Tibial artery (tissue), 4 donors: ENCODE measurements at regions of chr9 and their contacts with region 1.

Region 1: DNA sequence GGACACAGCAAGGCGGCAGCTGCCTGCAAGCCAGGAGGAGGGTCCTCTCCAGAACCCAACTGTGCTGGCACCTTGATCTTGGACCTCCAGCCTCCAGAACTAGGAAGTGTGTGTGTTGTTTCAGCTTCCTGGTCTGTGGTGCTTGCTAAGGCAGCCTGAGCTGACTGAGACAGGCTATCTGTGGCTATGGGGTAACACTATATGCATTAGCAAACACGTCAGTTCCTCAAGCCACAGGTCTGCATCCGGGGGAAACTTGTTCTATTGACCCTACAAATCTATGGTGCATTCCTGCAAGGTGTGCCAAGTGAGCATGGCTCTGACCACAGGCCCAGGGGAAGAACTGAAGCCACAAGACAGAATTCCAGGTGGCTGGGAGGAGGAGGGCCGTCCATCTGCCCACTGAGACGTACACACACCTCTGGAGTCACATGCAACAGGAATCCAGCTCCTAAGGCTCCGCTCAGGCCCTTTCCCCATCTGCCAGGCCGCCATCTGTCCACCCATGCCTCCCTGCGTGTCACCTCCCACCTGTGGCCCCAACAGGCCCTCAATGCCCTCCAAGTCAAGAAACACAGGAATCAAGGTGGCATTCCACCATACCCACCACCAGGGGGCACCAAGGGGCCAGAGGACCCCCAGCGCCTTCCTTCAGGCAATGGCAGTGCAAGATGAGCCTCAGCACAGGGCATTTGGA is 174.9 kb downstream of the ROR2 start:
- DNase-seq: peak in 1 of 2 donors; percentile 29
- H3K4me3 ChIP-seq: no peak overlapping the region
- H3K27ac ChIP-seq: no peak overlapping the region
- H3K4me1 ChIP-seq: peaks cover 0 to 7% (median 2%) of the 10 kb centered on the region in 4 donors
- H3K27me3 ChIP-seq: peaks cover 0 to 15% of the 10 kb centered on the region in 2 donors
- CTCF ChIP-seq: peak; percentile 55 to 58

Region 2: DNA sequence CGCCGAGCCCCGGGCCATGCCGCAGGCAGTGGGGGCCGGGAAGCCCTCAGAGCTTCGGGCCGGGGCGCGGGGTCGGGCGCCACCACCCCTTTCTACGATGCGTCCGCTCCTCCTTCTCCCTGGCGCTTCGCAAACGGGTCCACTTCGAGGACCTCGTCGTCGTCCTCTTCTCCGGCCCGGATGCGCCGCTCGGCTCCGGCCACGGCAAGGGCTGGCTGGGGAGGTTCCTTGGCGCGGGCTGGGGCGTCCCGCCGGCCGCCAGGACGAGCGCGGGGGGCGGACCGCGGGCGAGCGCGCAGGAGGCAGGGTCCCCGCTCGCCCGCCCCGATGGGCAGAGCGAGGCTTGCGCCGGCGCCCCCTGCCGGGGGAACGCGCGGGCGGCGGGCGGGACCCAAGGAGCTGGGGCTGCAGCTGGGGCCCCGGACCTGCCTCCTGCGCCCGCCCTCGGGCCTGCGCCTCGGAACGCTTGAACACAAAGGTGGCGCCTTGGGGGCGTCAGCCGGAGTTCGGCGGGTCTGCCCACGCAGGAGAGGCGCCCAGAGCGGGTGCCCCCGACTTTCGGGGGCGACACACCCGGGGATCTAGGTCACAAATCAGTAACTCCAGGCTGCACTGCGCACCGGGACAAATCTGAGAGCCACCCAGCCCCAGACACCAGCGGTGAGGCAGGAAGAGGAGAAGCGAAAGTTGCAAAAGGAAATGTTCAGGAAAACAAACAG is 174.9 kb after region 1 on chr9 and contains the start of gene ROR2:
- intact Hi-C with region 1: loop called (anchors 10 kb)
- DNase-seq: peak in 1 of 2 donors; percentile 73
- H3K4me3 ChIP-seq: peak within 1 kb of the TSS; percentile 41 to 44
- H3K27ac ChIP-seq: no peak within 1 kb of the TSS
- H3K4me1 ChIP-seq: peaks cover 0 to 23% (median 15%) of the 10 kb centered on the region in 4 donors
- H3K27me3 ChIP-seq: peaks cover 0 to 65% of the 10 kb centered on the region in 2 donors
- CTCF ChIP-seq: peak; percentile 14 to 37